ENCODE measurements at regions of chrX and their contacts with region 1.

Region 1: GRCh38 chrX:48957827-48958634 is 624 bp upstream of the OTUD5 start:
- DNase-seq: peak; percentile 86 to 97 (median 92)
- ATAC-seq: peak; percentile 80
- H3K4me3 ChIP-seq: peak overlapping the region; percentile 70
- H3K4me3 Mint-ChIP-seq: peak overlapping the region; percentile 99
- H3K27ac ChIP-seq: peak overlapping the region; percentile 93 to 98
- H3K27ac Mint-ChIP-seq: peak overlapping the region; percentile 99
- H3K4me1 ChIP-seq: peaks cover 54% of the 10 kb centered on the region
- H3K4me1 Mint-ChIP-seq: peaks cover 50% of the 10 kb centered on the region
- H3K27me3 ChIP-seq: no peaks in the 10 kb centered on the region
- H3K27me3 Mint-ChIP-seq: no peaks in the 10 kb centered on the region
- CTCF ChIP-seq: no peak

Region 2: GRCh38 chrX:48597353-48598264 is 360.4 kb before region 1 on chrX and contains the start of gene WDR13:
- CTCF ChIA-PET with region 1: no interaction called
- POLR2A ChIA-PET with region 1: no interaction called
- intact Hi-C with region 1: loop called in 1 of 2 experiments (anchors 5 kb)
- DNase-seq: peak; percentile 81 to 95 (median 90)
- ATAC-seq: peak; percentile 81
- H3K4me3 ChIP-seq: peak within 1 kb of the TSS; percentile 90
- H3K4me3 Mint-ChIP-seq: peak within 1 kb of the TSS; percentile 98
- H3K27ac ChIP-seq: peak within 1 kb of the TSS; percentile 96 to 99
- H3K27ac Mint-ChIP-seq: peak within 1 kb of the TSS; percentile 100
- H3K4me1 ChIP-seq: peaks cover 19% of the 10 kb centered on the region
- H3K4me1 Mint-ChIP-seq: peaks cover 15% of the 10 kb centered on the region
- H3K27me3 ChIP-seq: no peaks in the 10 kb centered on the region
- H3K27me3 Mint-ChIP-seq: no peaks in the 10 kb centered on the region
- CTCF ChIP-seq: no peak
- total RNA-seq, gene WDR13: 37.9 to 43.4 TPM

Region 3: GRCh38 chrX:48891402-48892288 is 66.4 kb before region 1 on chrX:
- CTCF ChIA-PET with region 1: interaction called, 4 read pairs
- POLR2A ChIA-PET with region 1: interaction called, 47 read pairs
- intact Hi-C with region 1: loop called in 1 of 2 experiments (anchors 1 kb)
- DNase-seq: peak; percentile 52 to 90 (median 72)
- ATAC-seq: peak; percentile 88
- H3K4me3 ChIP-seq: peak overlapping the region; percentile 60
- H3K4me3 Mint-ChIP-seq: peak overlapping the region; percentile 86
- H3K27ac ChIP-seq: peak overlapping the region in 1 of 2 donors; percentile 29
- H3K27ac Mint-ChIP-seq: peak overlapping the region; percentile 71
- H3K4me1 ChIP-seq: peaks cover 27% of the 10 kb centered on the region
- H3K4me1 Mint-ChIP-seq: peaks cover 26% of the 10 kb centered on the region
- H3K27me3 ChIP-seq: no peaks in the 10 kb centered on the region
- H3K27me3 Mint-ChIP-seq: no peaks in the 10 kb centered on the region
- CTCF ChIP-seq: peak; percentile 40

Region 4: GRCh38 chrX:48917139-48918001 is 40.7 kb before region 1 on chrX:
- CTCF ChIA-PET with region 1: no interaction called
- POLR2A ChIA-PET with region 1: interaction called, 26 read pairs
- intact Hi-C with region 1: loop called in 1 of 2 experiments (anchors 5 kb)
- DNase-seq: peak; percentile 79 to 94 (median 86)
- ATAC-seq: peak; percentile 33
- H3K4me3 ChIP-seq: peak overlapping the region; percentile 89
- H3K4me3 Mint-ChIP-seq: peak overlapping the region; percentile 98
- H3K27ac ChIP-seq: peak overlapping the region; percentile 61 to 80
- H3K27ac Mint-ChIP-seq: peak overlapping the region; percentile 95
- H3K4me1 ChIP-seq: peaks cover 69% of the 10 kb centered on the region
- H3K4me1 Mint-ChIP-seq: peaks cover 56% of the 10 kb centered on the region
- H3K27me3 ChIP-seq: no peaks in the 10 kb centered on the region
- H3K27me3 Mint-ChIP-seq: no peaks in the 10 kb centered on the region
- CTCF ChIP-seq: peak; percentile 79

Region 5: DNA sequence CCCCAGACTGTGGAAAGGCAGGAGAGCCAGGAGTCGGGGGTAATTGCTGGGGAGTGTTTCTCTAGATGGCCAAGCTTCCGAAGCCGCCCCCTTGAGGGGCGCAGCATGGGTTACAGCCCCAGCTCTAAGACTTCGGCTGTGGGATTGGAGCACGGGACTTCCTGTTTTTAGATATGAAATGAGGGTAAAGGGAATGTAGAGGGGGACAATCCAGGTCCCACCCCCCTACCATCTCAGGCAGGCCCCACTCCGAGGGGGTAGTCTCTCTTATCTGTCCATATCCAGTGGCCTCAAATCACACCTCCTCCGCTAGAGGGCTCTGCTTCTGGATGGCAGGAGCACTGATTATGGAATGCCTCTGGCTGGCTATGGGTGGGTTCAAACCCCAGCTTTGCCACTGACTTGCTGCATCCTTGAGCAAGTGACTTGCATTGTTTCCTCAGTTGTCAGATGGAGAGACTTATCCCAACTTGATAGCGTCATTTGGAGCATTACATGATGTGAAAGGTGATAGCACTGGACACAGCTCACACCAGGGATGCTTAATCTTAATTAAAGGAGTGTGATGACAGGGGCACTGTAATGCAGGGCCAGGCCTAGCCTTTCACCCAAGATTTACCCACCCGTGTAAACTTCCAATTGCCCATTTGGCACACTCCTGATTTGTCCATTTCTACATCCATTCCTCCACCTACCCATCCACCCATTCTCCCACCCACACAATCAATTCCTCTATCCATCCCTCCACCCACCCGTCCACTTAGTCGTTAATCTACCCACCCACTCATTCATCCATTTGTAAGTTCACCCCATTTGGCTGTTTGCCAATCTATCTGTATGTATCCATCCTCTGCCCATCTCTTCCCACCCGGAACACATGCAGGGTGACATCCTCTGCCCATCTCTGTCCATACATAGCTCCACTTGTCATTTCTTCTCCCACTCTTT is 14.5 kb after region 1 on chrX:
- CTCF ChIA-PET with region 1: interaction called, 6 read pairs
- POLR2A ChIA-PET with region 1: interaction called, 18 read pairs
- intact Hi-C with region 1: no loop called
- DNase-seq: peak in 7 of 14 experiments; percentile 14 to 59 (median 39)
- ATAC-seq: peak; percentile 48
- H3K4me3 ChIP-seq: peak overlapping the region; percentile 31
- H3K4me3 Mint-ChIP-seq: peak overlapping the region; percentile 20
- H3K27ac ChIP-seq: no peak overlapping the region
- H3K27ac Mint-ChIP-seq: no peak overlapping the region
- H3K4me1 ChIP-seq: peaks cover 16% of the 10 kb centered on the region
- H3K4me1 Mint-ChIP-seq: peaks cover 17% of the 10 kb centered on the region
- H3K27me3 ChIP-seq: no peaks in the 10 kb centered on the region
- H3K27me3 Mint-ChIP-seq: no peaks in the 10 kb centered on the region
- CTCF ChIP-seq: peak; percentile 59

Region 6: GRCh38 chrX:49079489-49080428 is 121.7 kb after region 1 on chrX and contains the start of gene WDR45:
- CTCF ChIA-PET with region 1: no interaction called
- POLR2A ChIA-PET with region 1: interaction called, 12 read pairs
- intact Hi-C with region 1: no loop called
- DNase-seq: peak; percentile 38 to 87 (median 67)
- ATAC-seq: peak; percentile 82
- H3K4me3 ChIP-seq: peak within 1 kb of the TSS; percentile 82
- H3K4me3 Mint-ChIP-seq: peak within 1 kb of the TSS; percentile 97
- H3K27ac ChIP-seq: peak within 1 kb of the TSS; percentile 92 to 96
- H3K27ac Mint-ChIP-seq: peak within 1 kb of the TSS; percentile 100
- H3K4me1 ChIP-seq: peaks cover 13% of the 10 kb centered on the region
- H3K4me1 Mint-ChIP-seq: peaks cover 12% of the 10 kb centered on the region
- H3K27me3 ChIP-seq: no peaks in the 10 kb centered on the region
- H3K27me3 Mint-ChIP-seq: no peaks in the 10 kb centered on the region
- CTCF ChIP-seq: no peak
- total RNA-seq, gene WDR45: 74.8 to 78.7 TPM

Region 7: DNA sequence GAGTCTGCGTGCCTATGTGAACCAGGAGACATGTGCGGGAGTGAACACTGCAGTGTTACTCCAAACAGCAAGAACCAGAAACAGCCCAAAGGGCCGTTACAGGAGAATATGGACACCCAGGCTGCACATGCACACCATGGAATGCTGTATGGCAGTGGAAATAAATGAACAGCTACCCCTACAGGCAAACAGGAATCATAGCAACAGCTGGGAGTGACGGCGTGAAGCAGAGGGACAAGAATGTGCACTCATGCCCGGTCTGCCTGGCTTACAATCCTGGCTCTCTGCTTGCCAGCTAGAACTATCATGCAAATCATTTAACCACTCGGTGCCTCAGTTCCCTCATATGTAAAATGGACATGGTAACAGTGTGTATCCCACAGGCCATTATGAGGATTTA is 148.9 kb after region 1 on chrX:
- CTCF ChIA-PET with region 1: no interaction called
- POLR2A ChIA-PET with region 1: no interaction called
- intact Hi-C with region 1: no loop called
- DNase-seq: peak in 4 of 14 experiments; percentile 5 to 34 (median 27)
- ATAC-seq: peak; percentile 63
- H3K4me3 ChIP-seq: no peak overlapping the region
- H3K4me3 Mint-ChIP-seq: no peak overlapping the region
- H3K27ac ChIP-seq: no peak overlapping the region
- H3K27ac Mint-ChIP-seq: no peak overlapping the region
- H3K4me1 ChIP-seq: no peaks in the 10 kb centered on the region
- H3K4me1 Mint-ChIP-seq: no peaks in the 10 kb centered on the region
- H3K27me3 ChIP-seq: no peaks in the 10 kb centered on the region
- H3K27me3 Mint-ChIP-seq: no peaks in the 10 kb centered on the region
- CTCF ChIP-seq: no peak

Region 8: DNA sequence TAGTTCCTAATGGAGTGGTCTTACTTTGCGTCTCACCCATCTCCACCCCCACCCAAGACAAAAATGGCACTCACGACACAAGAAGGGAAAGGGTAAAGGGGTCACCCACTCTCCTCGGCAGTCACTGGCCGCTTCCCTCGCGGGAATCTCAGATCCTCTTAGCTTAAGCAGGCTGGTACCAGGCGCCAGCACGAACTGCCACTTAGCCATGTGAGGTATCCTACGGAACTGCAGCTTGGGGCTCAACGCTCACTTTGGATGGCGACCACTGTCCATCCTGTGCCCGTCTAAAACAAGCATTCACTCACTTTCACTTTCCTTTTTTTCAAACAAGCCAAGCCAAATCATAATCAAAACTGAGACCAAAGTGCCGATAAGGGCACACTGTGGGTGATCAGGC is 189.9 kb after region 1 on chrX:
- CTCF ChIA-PET with region 1: no interaction called
- POLR2A ChIA-PET with region 1: no interaction called
- intact Hi-C with region 1: no loop called
- DNase-seq: no peak
- ATAC-seq: no peak
- H3K4me3 ChIP-seq: no peak overlapping the region
- H3K4me3 Mint-ChIP-seq: no peak overlapping the region
- H3K27ac ChIP-seq: no peak overlapping the region
- H3K27ac Mint-ChIP-seq: no peak overlapping the region
- H3K4me1 ChIP-seq: no peaks in the 10 kb centered on the region
- H3K4me1 Mint-ChIP-seq: no peaks in the 10 kb centered on the region
- H3K27me3 ChIP-seq: no peaks in the 10 kb centered on the region
- H3K27me3 Mint-ChIP-seq: no peaks in the 10 kb centered on the region
- CTCF ChIP-seq: no peak